ENCODE measurements at regions of chr10 and their contacts with region 1.

Region 1: DNA sequence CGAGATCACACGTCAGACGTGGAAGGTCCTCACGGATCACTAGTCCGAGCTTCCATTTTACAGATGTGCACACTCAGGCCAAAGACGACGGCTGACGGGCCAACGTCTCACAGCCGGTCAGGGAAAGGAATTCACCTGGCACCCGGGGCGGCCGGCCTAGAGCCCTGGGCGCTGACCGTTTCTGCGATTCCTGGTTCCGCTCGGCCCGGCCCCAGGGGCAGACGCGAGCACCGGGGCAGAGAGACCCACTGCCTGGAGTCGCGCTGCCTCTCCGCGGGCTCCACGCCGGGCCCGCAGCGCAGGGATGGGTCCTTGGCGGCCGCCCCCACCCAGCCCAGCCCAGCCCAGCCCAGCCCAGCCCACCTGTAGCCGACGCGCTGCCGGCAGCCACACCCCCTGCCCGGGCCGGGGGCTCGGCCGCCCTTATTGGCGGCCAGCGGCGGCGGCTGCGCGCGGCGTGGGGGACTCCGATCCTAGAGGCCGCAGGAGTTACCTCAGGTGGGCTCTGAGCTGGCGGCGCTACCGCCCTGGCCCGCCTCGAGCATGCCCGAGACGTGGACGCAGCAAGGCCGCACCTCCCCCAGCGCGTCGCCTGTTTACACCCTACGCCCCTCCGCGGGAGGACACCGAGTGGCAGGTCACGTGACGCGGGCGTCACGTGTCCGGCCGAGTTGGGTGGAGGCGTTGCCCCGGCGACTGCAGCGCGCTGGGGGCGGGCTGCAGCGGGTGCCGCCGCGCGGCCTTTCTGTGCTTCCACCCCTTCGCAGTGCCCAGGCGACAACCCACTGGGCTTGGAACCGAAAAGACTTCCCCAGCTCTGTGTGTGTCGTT is 78.1 kb downstream of the ZFAND4 start:
- DNase-seq: peak; percentile 89
- H3K4me3 ChIP-seq: peak overlapping the region; percentile 68 to 95 (median 72)
- H3K27ac ChIP-seq: peak overlapping the region; percentile 56
- H3K4me1 ChIP-seq: peaks cover 13% of the 10 kb centered on the region
- H3K27me3 ChIP-seq: no peaks in the 10 kb centered on the region
- CTCF ChIP-seq: peak in 1 of 2 donors; percentile 12

Region 2: GRCh38 chr10:45464958-45465567 is 129.4 kb before region 1 on chr10:
- CTCF ChIA-PET with region 1: no interaction called
- dilution Hi-C with region 1: no loop called
- in situ Hi-C with region 1: no loop called
- intact Hi-C with region 1: loop called (anchors 2 kb)
- DNase-seq: peak; percentile 47
- H3K4me3 ChIP-seq: no peak overlapping the region
- H3K27ac ChIP-seq: no peak overlapping the region
- H3K4me1 ChIP-seq: no peaks in the 10 kb centered on the region
- H3K27me3 ChIP-seq: no peaks in the 10 kb centered on the region
- CTCF ChIP-seq: peak; percentile 95 to 97

Region 3: GRCh38 chr10:45514291-45515270 is 79.9 kb before region 1 on chr10:
- CTCF ChIA-PET with region 1: no interaction called
- dilution Hi-C with region 1: no loop called
- in situ Hi-C with region 1: no loop called
- intact Hi-C with region 1: loop called (anchors 5 kb)
- DNase-seq: peak; percentile 86
- H3K4me3 ChIP-seq: peak overlapping the region; percentile 50 to 65 (median 52)
- H3K27ac ChIP-seq: peak overlapping the region; percentile 47
- H3K4me1 ChIP-seq: peaks cover 26% of the 10 kb centered on the region
- H3K27me3 ChIP-seq: no peaks in the 10 kb centered on the region
- CTCF ChIP-seq: no peak

Region 4: DNA sequence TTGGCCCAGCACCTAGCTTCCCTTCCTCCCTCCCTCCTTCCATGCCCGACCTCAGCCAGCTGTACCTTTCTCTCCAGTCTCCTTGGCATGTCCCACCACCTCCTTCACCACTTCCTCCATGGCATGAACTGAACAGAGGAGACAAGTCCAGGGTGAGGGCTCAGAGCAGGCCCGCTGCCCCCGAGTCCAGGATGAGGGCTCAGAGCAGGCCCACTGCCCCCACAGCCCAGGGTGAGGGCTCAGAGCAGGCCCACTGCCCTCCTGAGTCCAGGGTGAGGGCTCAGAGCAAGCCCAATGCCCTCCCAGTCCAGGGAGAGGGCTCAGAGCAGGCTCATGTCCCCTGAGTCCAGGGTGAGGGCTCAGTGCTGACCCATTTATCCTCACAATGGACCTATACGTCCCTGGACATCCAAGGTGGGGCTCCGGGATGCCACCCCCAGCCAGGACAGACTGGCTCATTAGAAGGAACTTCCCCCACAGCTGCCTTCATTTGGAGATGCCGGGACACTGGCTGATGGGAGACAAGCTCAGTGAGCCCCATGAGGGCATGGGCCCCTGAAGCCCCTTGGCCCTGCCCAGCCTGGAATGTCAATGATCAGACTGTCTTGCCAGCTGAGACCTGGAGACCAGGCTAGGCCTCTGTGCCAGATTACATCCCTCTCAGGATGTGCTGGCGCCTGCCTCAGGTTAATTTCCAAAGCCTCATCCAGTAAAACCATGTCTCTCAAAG is 222.8 kb after region 1 on chr10:
- CTCF ChIA-PET with region 1: no interaction called
- dilution Hi-C with region 1: no loop called
- in situ Hi-C with region 1: no loop called
- intact Hi-C with region 1: no loop called
- DNase-seq: no peak
- H3K4me3 ChIP-seq: no peak overlapping the region
- H3K27ac ChIP-seq: no peak overlapping the region
- H3K4me1 ChIP-seq: no peaks in the 10 kb centered on the region
- H3K27me3 ChIP-seq: no peaks in the 10 kb centered on the region
- CTCF ChIP-seq: no peak